Activated naive CD4-positive, alpha-beta T cell treated with anti-CD3 and anti-CD28 coated beads, Interleukin-2, amount 10 ng/mL, durations not matched to agents 7 days and 5 days (primary cell): ENCODE measurements at regions of chr3 and their contacts with region 1.

Region 1: GRCh38 chr3:43638594-43639447 is 17.0 kb upstream of the ANO10 start:
- DNase-seq: peak; percentile 76
- H3K4me3 Mint-ChIP-seq: no peak overlapping the region
- H3K27ac Mint-ChIP-seq: no peak overlapping the region
- H3K4me1 Mint-ChIP-seq: peaks cover 9% of the 10 kb centered on the region
- H3K27me3 Mint-ChIP-seq: peaks cover 28% of the 10 kb centered on the region

Region 2: GRCh38 chr3:43540624-43541023 is 98.2 kb before region 1 on chr3:
- CTCF ChIA-PET with region 1: interaction called, 10 read pairs
- DNase-seq: no peak
- H3K4me3 Mint-ChIP-seq: no peak overlapping the region
- H3K27ac Mint-ChIP-seq: no peak overlapping the region
- H3K4me1 Mint-ChIP-seq: no peaks in the 10 kb centered on the region
- H3K27me3 Mint-ChIP-seq: no peaks in the 10 kb centered on the region

Region 3: DNA sequence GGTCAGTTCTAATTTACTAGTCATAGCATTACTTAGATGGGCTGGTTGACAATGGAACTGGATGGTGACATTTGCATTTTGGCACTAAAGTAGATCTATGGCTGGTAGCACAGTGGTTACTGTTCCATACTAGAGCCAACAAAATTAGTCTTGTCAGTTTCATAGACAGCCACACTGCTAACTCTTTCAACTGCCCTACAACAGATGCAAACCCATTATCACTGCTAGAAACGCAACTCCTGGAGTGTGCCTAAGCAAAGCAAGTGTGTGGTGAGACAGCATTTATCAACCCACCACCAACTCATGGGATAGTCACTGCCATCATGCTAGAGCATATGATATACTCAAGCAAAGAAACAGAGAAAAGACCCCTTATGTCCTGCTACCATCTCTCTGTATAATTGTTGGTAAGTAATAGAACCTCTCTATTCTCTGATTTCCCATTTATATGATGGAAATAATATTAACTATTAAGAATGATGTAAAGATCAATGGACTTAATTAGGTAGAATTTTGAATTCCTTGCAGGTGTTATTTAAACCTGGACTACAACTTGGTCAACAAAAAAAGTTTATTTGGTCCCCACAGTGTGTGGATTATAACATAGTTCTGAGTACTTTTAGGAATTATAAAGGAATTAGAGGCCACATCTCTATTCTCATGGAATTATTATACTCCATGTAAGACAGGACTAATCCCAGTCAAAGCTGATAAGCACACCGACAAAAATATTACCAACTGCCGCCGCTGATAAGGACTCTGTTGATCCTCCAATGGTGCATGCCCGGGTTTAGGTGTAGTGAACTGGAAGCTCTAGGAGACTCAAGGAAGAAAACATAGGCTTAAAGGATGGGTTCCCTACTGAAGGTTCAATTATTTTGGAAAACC is 32.1 kb after region 1 on chr3:
- CTCF ChIA-PET with region 1: no interaction called
- DNase-seq: no peak
- H3K4me3 Mint-ChIP-seq: no peak overlapping the region
- H3K27ac Mint-ChIP-seq: no peak overlapping the region
- H3K4me1 Mint-ChIP-seq: no peaks in the 10 kb centered on the region
- H3K27me3 Mint-ChIP-seq: peaks cover 8% of the 10 kb centered on the region

Region 4: DNA sequence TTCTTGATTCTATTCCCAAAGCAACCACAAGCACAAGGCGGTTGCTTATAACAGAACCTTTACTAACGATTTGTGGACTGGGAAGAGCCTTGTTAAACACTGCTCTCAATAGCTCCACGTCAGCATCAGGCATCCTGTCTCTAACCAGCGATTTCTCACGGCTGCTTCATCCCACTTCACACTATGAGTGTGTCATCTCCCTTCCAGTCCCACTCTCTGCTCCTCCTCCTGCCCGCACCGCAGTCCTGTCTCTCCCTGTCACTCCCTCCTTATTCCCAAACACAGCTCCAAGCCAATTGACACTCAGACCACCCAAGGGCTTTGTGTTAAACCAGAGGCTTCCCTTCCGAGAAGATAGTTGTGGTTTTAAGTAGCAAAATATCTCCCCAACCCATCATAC is 146.7 kb after region 1 on chr3:
- CTCF ChIA-PET with region 1: no interaction called
- DNase-seq: no peak
- H3K4me3 Mint-ChIP-seq: no peak overlapping the region
- H3K27ac Mint-ChIP-seq: no peak overlapping the region
- H3K4me1 Mint-ChIP-seq: no peaks in the 10 kb centered on the region
- H3K27me3 Mint-ChIP-seq: peaks cover 8% of the 10 kb centered on the region

Region 5: GRCh38 chr3:43879166-43879565 is 240.3 kb after region 1 on chr3:
- CTCF ChIA-PET with region 1: no interaction called
- DNase-seq: no peak
- H3K4me3 Mint-ChIP-seq: no peak overlapping the region
- H3K27ac Mint-ChIP-seq: no peak overlapping the region
- H3K4me1 Mint-ChIP-seq: no peaks in the 10 kb centered on the region
- H3K27me3 Mint-ChIP-seq: peaks cover 9% of the 10 kb centered on the region